Heart right ventricle (tissue), 16 donors: ENCODE measurements at regions of chr12 and their contacts with region 1.

Region 1: GRCh38 chr12:44972746-44973421 is 78.0 kb downstream of the DBX2 start:
- DNase-seq: no peak
- ATAC-seq: no peak
- H3K4me3 ChIP-seq: no peak overlapping the region
- H3K27ac ChIP-seq: no peak overlapping the region
- H3K4me1 ChIP-seq: no peaks in the 10 kb centered on the region
- H3K27me3 ChIP-seq: no peaks in the 10 kb centered on the region
- CTCF ChIP-seq: peak in 6 of 9 donors; percentile 12 to 41 (median 23)

Region 2: DNA sequence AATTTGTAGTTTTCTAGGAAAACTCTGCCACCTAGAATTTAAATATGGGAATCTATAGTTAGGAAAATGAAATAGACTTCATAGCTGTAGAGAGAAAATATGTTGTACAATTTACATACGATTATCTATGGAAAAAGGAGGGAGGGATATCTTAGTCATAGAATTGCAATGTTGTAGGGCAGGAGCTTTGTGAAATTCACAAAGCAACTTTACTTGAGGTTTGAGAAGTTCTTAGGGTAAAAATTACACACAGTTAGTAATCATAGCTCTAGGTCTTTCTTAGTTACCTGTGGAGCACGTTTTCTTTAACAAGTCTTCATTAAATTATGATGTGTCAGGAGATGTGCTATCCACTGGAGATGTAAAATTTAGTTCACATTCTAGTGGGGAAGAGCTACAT is 139.4 kb after region 1 on chr12:
- intact Hi-C with region 1: loop called in 1 of 10 experiments (anchors 10 kb)
- DNase-seq: no peak
- ATAC-seq: no peak
- H3K4me3 ChIP-seq: no peak overlapping the region
- H3K27ac ChIP-seq: no peak overlapping the region
- H3K4me1 ChIP-seq: no peaks in the 10 kb centered on the region
- H3K27me3 ChIP-seq: peaks cover 0 to 4% (median 0%) of the 10 kb centered on the region in 7 donors
- CTCF ChIP-seq: no peak

Region 3: DNA sequence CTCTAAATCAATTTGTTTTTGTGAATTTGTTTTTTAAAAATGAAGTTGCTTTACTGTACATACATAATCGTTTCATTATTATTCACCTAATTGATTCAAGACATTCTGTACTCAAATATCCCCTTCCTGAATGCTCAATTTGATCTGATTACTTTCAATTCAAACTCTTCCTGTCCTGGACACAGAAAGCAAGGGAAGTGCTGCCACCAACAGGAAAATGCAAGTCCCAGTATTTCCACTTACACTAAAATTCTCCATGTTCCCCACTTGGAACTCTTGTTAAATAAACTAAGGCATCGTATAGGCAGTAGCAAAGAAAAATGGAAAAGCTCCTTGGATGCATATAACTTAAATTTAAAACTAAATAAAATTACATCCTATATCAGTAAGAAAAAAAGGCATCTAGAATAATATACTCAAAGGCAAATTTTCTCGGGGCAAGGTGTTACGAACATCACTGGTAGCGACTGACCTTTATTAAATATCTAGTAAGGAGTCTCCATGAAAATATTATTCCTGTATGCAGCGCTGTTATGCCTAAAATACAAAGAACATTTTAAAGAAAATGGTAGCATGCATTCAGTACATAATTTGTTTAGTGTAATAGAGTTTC is 150.0 kb after region 1 on chr12:
- intact Hi-C with region 1: loop called in 3 of 10 experiments (anchors 10 kb)
- DNase-seq: no peak
- ATAC-seq: no peak
- H3K4me3 ChIP-seq: no peak overlapping the region
- H3K27ac ChIP-seq: no peak overlapping the region
- H3K4me1 ChIP-seq: no peaks in the 10 kb centered on the region
- H3K27me3 ChIP-seq: no peaks in the 10 kb centered on the region
- CTCF ChIP-seq: peak in 6 of 9 donors; percentile 32 to 55 (median 47)